Activated CD4-positive, alpha-beta memory T cell treated with anti-CD3 and anti-CD28 coated beads for 36 hours (primary cell): ENCODE measurements at regions of chr6 and their contacts with region 1.

Region 1: DNA sequence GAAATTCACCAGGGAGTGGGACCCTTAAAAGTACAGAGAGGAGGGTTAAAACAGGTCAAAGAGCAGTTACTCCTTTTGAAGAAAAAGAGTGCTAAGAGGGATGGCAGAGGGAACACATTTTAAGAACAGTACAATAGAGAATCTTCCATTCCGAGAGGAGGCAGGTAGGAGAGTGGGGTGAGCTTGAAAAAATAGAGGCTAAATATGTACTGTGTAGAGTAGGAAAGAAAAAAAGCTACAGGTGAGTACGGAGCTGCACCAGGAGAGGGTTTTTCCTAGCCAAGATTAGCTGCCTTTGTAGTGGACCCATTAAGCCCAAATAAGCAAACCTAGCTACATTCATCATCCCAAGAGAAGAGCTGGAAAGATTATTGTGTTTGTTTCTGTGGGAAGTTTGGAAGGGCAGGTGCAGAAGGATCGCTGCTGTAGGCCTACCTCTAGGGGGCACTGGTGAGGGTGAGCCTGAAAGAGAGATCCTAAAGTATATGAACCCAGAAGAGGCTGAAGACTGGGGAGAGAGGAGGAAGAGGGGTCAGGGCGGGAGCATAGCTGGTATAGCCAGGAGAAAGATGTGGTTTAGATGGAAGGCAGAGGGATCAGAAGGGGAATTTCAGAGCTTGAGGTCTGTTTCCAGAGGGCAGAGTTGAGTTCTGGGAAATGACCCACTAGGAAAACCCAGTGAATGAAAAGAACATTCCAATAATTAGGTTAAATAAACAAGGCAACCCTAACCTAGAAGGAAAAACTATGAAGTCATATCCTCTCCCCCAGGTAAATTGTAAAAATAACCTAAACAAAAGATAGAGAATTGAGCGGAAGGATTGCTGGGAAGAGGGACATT is 50.2 kb upstream of the HINT3 start:
- DNase-seq: peak; percentile 63
- H3K4me3 Mint-ChIP-seq: no peak overlapping the region
- H3K27ac Mint-ChIP-seq: peak overlapping the region; percentile 26
- H3K4me1 Mint-ChIP-seq: peaks cover 47% of the 10 kb centered on the region
- H3K27me3 Mint-ChIP-seq: no peaks in the 10 kb centered on the region

Region 2: DNA sequence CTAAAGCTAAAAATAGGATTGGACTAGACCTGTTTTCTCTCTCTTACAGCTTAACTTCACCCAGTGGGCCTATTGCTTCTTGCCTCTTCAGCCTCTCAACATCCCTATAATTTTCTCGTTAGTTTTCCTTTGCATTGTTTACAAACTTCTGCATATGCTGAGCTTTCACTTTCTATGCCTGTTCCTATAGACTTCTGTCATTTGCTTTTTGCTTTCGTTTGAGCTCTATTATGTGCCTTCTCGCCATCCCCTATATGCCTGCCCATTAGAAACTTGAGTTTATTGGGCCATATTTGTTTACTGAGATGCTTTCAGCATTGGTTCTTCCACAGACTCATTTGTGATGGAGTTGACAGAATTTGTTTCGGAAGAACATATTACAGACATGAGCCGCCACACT is 74.7 kb before region 1 on chr6:
- CTCF ChIA-PET with region 1: interaction called, 3 read pairs
- POLR2A ChIA-PET with region 1: no interaction called
- intact Hi-C with region 1: loop called (anchors 1 kb)
- DNase-seq: no peak
- H3K4me3 Mint-ChIP-seq: peak overlapping the region; percentile 71
- H3K27ac Mint-ChIP-seq: peak overlapping the region; percentile 71
- H3K4me1 Mint-ChIP-seq: peaks cover 72% of the 10 kb centered on the region
- H3K27me3 Mint-ChIP-seq: no peaks in the 10 kb centered on the region